ENCODE measurements at regions of chr17 and their contacts with region 1.

Region 1: GRCh38 chr17:20121359-20122253 is 112.4 kb downstream of the SPECC1 start:
- DNase-seq: peak; percentile 23
- ATAC-seq: peak; percentile 92
- H3K4me3 ChIP-seq: no peak overlapping the region
- H3K27ac ChIP-seq: no peak overlapping the region
- H3K4me1 ChIP-seq: no peaks in the 10 kb centered on the region
- H3K27me3 ChIP-seq: no peaks in the 10 kb centered on the region
- CTCF ChIP-seq: peak; percentile 79 to 95 (median 91)
- EP300 ChIP-seq: no peak
- POLR2A ChIP-seq: no peak
- RAD21 ChIP-seq: peak; percentile 98

Region 2: GRCh38 chr17:19992803-19993713 is 128.5 kb before region 1 on chr17:
- CTCF ChIA-PET with region 1: interaction called, 28 read pairs
- POLR2A ChIA-PET with region 1: no interaction called
- RAD21 ChIA-PET with region 1: interaction called, 15 read pairs
- SMC1A ChIA-PET with region 1: interaction called, 12 read pairs
- in situ Hi-C with region 1: no loop called
- intact Hi-C with region 1: loop called (anchors 1 kb)
- DNase-seq: peak; percentile 20
- ATAC-seq: peak; percentile 100
- H3K4me3 ChIP-seq: no peak overlapping the region
- H3K27ac ChIP-seq: no peak overlapping the region
- H3K4me1 ChIP-seq: no peaks in the 10 kb centered on the region
- H3K27me3 ChIP-seq: no peaks in the 10 kb centered on the region; a peak in 1 of 4 replicates
- CTCF ChIP-seq: peak; percentile 66 to 83 (median 67)
- EP300 ChIP-seq: no peak
- POLR2A ChIP-seq: no peak
- RAD21 ChIP-seq: peak; percentile 82

Region 3: GRCh38 chr17:20009302-20010098 is 112.1 kb before region 1 on chr17 and contains the start of gene SPECC1:
- CTCF ChIA-PET with region 1: interaction called, 3 read pairs
- POLR2A ChIA-PET with region 1: no interaction called
- RAD21 ChIA-PET with region 1: no interaction called
- SMC1A ChIA-PET with region 1: no interaction called
- in situ Hi-C with region 1: no loop called
- intact Hi-C with region 1: loop called (anchors 5 kb)
- DNase-seq: no peak
- ATAC-seq: peak; percentile 100
- H3K4me3 ChIP-seq: peak within 1 kb of the TSS; percentile 72
- H3K27ac ChIP-seq: no peak within 1 kb of the TSS
- H3K4me1 ChIP-seq: no peaks in the 10 kb centered on the region
- H3K27me3 ChIP-seq: peaks cover 0 to 9% of the 10 kb centered on the region in 2 experiments
- CTCF ChIP-seq: peak in 2 of 3 experiments; percentile 76 to 93; a peak in 4 of 6 replicates
- EP300 ChIP-seq: no peak
- POLR2A ChIP-seq: no peak
- RAD21 ChIP-seq: no peak
- polyA plus RNA-seq, gene SPECC1: 6.4 to 7.9 TPM

Region 4: GRCh38 chr17:20226814-20227482 is 105.3 kb after region 1 on chr17:
- CTCF ChIA-PET with region 1: interaction called, 28 read pairs
- POLR2A ChIA-PET with region 1: no interaction called
- RAD21 ChIA-PET with region 1: interaction called, 3 read pairs
- SMC1A ChIA-PET with region 1: interaction called, 6 read pairs
- in situ Hi-C with region 1: no loop called
- intact Hi-C with region 1: loop called (anchors 2 kb)
- DNase-seq: no peak
- ATAC-seq: peak; percentile 98
- H3K4me3 ChIP-seq: no peak overlapping the region
- H3K27ac ChIP-seq: no peak overlapping the region
- H3K4me1 ChIP-seq: no peaks in the 10 kb centered on the region
- H3K27me3 ChIP-seq: no peaks in the 10 kb centered on the region
- CTCF ChIP-seq: peak; percentile 86 to 87 (median 86)
- EP300 ChIP-seq: no peak
- POLR2A ChIP-seq: no peak
- RAD21 ChIP-seq: peak; percentile 84

Measured in GM12878 (cell line).